B cell (primary cell): ENCODE measurements at regions of chr19 and their contacts with region 1.

Region 1: GRCh38 chr19:42596391-42597072 is 1.8 kb upstream of the CEACAM8 start:
- DNase-seq: peak; percentile 69
- ATAC-seq: peak; percentile 47
- H3K4me3 ChIP-seq: no peak overlapping the region
- H3K4me3 Mint-ChIP-seq: no peak overlapping the region
- H3K27ac ChIP-seq: no peak overlapping the region
- H3K27ac Mint-ChIP-seq: no peak overlapping the region
- H3K4me1 ChIP-seq: peaks cover 3 to 7% of the 10 kb centered on the region in 2 donors
- H3K4me1 Mint-ChIP-seq: peaks cover 5% of the 10 kb centered on the region
- H3K27me3 ChIP-seq: peaks cover 0 to 17% (median 4%) of the 10 kb centered on the region in 4 experiments
- H3K27me3 Mint-ChIP-seq: peaks cover 22% of the 10 kb centered on the region
- CTCF ChIP-seq: peak; percentile 99

Region 2: DNA sequence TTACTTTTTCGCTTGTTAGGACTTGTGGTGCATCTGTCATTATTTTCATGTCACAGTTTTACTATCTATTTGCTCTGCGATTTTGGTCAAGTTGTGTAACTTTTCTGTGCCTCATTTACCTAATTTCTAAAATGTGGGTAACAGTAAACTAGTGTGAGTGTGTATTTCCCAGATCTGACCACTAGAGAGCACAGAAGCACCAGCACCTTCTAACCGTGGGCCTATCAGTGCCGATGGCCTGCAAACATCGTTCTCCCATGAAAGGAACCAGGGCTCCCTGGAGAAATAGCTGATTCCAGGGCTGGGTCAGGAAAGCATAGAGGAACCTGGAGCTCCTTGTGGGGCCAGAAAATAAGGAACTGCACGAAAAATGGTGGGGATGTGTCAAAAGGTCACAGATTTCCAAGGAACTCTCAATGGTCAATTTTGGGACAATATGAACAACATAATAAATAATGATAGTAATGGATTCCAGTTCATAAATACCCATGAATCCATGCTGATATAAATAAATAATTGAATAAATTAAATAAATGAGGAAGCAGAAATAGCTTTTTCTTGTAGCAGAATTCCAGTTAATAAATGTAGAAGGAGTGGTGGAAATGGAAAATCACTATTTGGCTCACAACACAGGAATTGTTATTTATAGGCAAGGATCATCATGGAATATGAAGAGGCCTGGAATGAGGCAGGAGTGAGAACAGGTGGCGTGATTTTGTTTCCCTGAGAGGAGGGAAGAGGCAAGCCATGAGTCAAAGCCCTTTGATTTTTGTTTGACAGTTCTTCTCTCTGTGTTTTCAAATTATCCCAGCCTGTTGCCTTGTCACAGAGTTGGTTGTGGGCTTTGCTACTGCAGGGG is 33.0 kb before region 1 on chr19:
- CTCF ChIA-PET with region 1: interaction called, 130 read pairs
- POLR2A ChIA-PET with region 1: no interaction called
- intact Hi-C with region 1: loop called (anchors 1 kb)
- DNase-seq: peak; percentile 66
- ATAC-seq: peak; percentile 54
- H3K4me3 ChIP-seq: no peak overlapping the region
- H3K4me3 Mint-ChIP-seq: no peak overlapping the region
- H3K27ac ChIP-seq: no peak overlapping the region
- H3K27ac Mint-ChIP-seq: no peak overlapping the region
- H3K4me1 ChIP-seq: peaks cover 17 to 21% of the 10 kb centered on the region in 2 donors
- H3K4me1 Mint-ChIP-seq: peaks cover 20% of the 10 kb centered on the region
- H3K27me3 ChIP-seq: peaks cover 0 to 9% (median 0%) of the 10 kb centered on the region in 4 experiments
- H3K27me3 Mint-ChIP-seq: peaks cover 22% of the 10 kb centered on the region
- CTCF ChIP-seq: peak; percentile 80

Region 3: GRCh38 chr19:42577016-42577415 is 19.5 kb before region 1 on chr19:
- CTCF ChIA-PET with region 1: interaction called, 14 read pairs
- POLR2A ChIA-PET with region 1: no interaction called
- intact Hi-C with region 1: no loop called
- DNase-seq: no peak
- ATAC-seq: no peak
- H3K4me3 ChIP-seq: no peak overlapping the region
- H3K4me3 Mint-ChIP-seq: peak overlapping the region; percentile 52
- H3K27ac ChIP-seq: peak overlapping the region; percentile 50 to 69
- H3K27ac Mint-ChIP-seq: peak overlapping the region; percentile 64
- H3K4me1 ChIP-seq: peaks cover 26 to 28% of the 10 kb centered on the region in 2 donors
- H3K4me1 Mint-ChIP-seq: peaks cover 35% of the 10 kb centered on the region
- H3K27me3 ChIP-seq: no peaks in the 10 kb centered on the region
- H3K27me3 Mint-ChIP-seq: peaks cover 13% of the 10 kb centered on the region
- CTCF ChIP-seq: no peak

Region 4: DNA sequence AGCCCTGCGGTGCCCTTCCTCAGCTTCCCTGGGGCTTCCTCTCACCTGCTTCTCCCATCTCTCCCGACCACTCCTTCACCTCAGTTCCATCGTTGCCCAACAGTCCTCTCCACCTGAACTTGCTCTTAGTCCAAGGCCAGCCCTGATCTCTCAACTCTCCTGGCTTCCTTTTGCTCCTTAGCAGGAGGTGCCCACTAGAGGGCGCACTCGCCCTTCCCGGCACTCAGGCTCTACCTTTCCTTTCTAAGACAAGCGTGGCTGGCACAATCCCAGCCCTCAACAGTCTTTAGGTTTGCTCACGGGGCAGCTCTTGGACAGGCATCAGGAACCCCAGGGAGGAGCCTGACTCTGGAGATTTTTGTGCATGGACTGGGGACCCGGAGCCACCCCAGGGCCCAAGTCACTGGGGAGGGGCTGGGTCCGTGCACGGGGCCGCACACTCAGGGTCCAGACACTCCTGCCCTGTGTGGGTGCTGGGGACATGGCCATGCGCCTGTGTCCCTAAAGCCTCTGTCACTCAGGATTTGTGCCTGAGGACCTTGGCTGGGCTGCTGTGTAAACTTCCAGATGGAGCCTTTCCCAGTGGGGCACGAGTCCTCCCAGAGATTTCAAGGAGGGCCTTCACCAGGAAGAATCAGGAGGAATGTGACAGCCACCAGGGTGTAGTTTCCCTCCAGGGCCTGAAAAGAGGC is 10.3 kb after region 1 on chr19:
- CTCF ChIA-PET with region 1: interaction called, 16 read pairs
- POLR2A ChIA-PET with region 1: no interaction called
- intact Hi-C with region 1: no loop called
- DNase-seq: peak; percentile 55
- ATAC-seq: no peak
- H3K4me3 ChIP-seq: no peak overlapping the region
- H3K4me3 Mint-ChIP-seq: no peak overlapping the region
- H3K27ac ChIP-seq: no peak overlapping the region
- H3K27ac Mint-ChIP-seq: no peak overlapping the region
- H3K4me1 ChIP-seq: no peaks in the 10 kb centered on the region
- H3K4me1 Mint-ChIP-seq: no peaks in the 10 kb centered on the region
- H3K27me3 ChIP-seq: peaks cover 0 to 25% (median 2%) of the 10 kb centered on the region in 4 experiments
- H3K27me3 Mint-ChIP-seq: peaks cover 41% of the 10 kb centered on the region
- CTCF ChIP-seq: peak; percentile 71

Region 5: DNA sequence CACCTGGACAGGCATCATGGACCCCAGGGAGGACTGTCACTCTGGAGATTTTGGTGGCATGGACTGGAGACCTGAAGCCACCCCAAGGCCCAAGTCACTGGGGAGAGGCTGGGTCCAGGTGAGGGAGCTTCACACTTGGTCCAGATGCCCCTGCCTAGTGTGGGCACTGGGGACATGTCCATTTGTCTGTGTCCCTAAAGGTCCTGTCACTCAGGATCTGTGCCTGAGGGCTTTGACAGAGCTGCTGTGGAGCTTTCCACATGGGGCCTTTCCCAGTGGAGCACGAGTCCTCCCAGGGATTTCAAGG is 38.7 kb after region 1 on chr19:
- CTCF ChIA-PET with region 1: no interaction called
- POLR2A ChIA-PET with region 1: no interaction called
- intact Hi-C with region 1: no loop called
- DNase-seq: no peak
- ATAC-seq: no peak
- H3K4me3 ChIP-seq: no peak overlapping the region
- H3K4me3 Mint-ChIP-seq: no peak overlapping the region
- H3K27ac ChIP-seq: no peak overlapping the region
- H3K27ac Mint-ChIP-seq: no peak overlapping the region
- H3K4me1 ChIP-seq: no peaks in the 10 kb centered on the region
- H3K4me1 Mint-ChIP-seq: no peaks in the 10 kb centered on the region
- H3K27me3 ChIP-seq: peaks cover 0 to 13% (median 0%) of the 10 kb centered on the region in 4 experiments
- H3K27me3 Mint-ChIP-seq: peaks cover 31% of the 10 kb centered on the region
- CTCF ChIP-seq: peak; percentile 42

Region 6: GRCh38 chr19:42857561-42857901 is 261.0 kb after region 1 on chr19:
- CTCF ChIA-PET with region 1: no interaction called
- POLR2A ChIA-PET with region 1: no interaction called
- intact Hi-C with region 1: no loop called
- DNase-seq: peak; percentile 6
- ATAC-seq: no peak
- H3K4me3 ChIP-seq: no peak overlapping the region
- H3K4me3 Mint-ChIP-seq: no peak overlapping the region
- H3K27ac ChIP-seq: no peak overlapping the region
- H3K27ac Mint-ChIP-seq: no peak overlapping the region
- H3K4me1 ChIP-seq: no peaks in the 10 kb centered on the region
- H3K4me1 Mint-ChIP-seq: no peaks in the 10 kb centered on the region
- H3K27me3 ChIP-seq: no peaks in the 10 kb centered on the region
- H3K27me3 Mint-ChIP-seq: peaks cover 7% of the 10 kb centered on the region
- CTCF ChIP-seq: no peak